HCT116 (cell line): ENCODE measurements at regions of chr14 and their contacts with region 1.

Region 1: DNA sequence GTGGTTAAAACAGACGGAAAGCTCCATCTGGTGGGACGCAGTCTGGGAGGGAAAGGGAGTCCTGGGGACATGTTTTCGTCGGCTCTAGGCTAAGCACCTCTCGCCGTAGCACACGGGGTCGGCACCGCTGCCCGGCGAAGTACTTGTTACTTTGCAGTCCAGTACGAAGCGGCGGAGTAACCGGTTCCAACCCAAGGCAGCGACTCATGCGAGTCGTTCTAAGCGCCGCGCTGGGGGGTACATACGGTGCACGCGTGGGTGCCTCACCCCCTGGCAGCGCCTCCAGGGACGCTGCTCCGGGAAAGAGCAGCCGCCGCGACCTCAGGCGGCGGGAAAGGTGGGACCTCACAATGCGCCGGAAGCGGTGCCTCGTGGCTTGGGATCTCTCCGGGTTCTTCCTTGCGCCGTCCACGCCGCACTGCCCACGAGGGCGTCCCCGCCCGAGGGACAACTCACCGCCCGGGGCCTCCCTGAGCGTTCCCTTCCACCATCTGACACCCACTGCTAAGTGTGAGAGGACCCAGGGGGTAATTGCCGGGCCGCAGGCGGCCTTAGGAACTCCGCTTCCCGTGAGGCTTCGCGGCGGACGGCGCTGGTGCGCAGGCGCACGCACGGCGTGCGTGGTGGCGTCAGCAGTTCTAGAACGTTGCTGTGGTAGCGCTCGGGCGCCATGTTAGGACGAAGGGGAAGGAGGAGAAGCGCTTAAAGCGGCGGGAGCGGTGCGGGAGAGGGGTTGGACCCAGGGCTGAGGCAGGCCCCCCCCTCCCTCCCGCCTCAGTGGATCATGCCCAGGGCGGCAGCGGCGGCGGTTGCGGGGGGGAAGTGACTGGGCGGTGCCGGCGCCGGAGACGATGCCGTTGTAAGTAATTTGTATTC is at the start of gene PAPOLA:
- DNase-seq: peak; percentile 91
- ATAC-seq: peak; percentile 90
- H3K4me3 ChIP-seq: peak within 1 kb of the TSS; percentile 70 to 97
- H3K27ac ChIP-seq: peak within 1 kb of the TSS; percentile 83
- H3K4me1 ChIP-seq: peaks cover 13 to 33% of the 10 kb centered on the region in 2 experiments
- H3K27me3 ChIP-seq: no peaks in the 10 kb centered on the region
- CTCF ChIP-seq: no peak
- POLR2A ChIP-seq: peak; percentile 79
- RAD21 ChIP-seq: no peak
- total RNA-seq, gene PAPOLA: 223 TPM

Region 2: DNA sequence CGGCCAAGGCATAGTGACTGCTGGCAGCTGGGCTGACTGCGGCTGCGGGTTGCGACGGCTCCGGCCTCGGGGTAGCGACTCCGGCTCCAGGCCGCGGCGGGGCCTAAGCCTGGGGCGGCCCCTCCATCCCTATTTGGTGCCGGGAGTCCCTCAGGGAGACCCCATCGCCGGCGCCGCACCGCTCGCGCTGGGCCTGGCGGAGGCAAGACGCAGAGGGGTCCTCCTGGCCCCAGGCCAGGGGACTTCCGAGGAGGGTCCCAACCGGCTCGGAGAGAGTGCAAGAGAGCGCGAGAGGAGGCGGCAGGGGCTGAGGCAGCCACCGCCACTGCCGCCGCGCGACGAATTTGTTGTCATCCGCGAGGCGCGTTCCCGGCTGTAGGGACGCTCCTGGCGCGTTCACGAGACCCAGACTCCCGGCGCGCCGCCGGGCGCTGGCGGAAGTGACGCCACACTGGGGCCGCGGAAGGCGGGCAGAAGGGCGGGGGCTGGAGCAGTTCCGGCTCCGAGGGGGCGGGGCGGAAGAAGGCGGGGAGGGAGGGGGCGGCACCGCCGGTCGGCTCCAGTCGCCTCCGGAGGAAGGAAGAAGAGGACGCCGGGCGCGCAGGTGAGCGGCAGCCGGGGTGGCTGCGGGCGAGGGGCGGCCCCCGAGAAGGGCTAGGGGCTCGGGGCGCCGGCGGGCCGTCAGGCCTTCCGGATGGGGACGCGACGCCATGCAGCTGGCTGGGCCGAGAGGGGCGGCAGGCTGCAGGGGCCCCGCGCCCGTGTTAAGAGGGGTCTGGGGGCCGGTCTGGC is 138.8 kb before region 1 on chr14 and contains the starts of genes ATG2B and GSKIP:
- CTCF ChIA-PET with region 1: no interaction called
- POLR2A ChIA-PET with region 1: no interaction called
- RAD21 ChIA-PET with region 1: no interaction called
- intact Hi-C with region 1: loop called (anchors 10 kb)
- DNase-seq: peak; percentile 83
- ATAC-seq: peak; percentile 82
- H3K4me3 ChIP-seq: peak within 1 kb of the TSS; percentile 85 to 92
- H3K27ac ChIP-seq: peak within 1 kb of the TSS; percentile 58; the same call in 1 of the 2 replicates
- H3K4me1 ChIP-seq: peaks cover 11 to 24% of the 10 kb centered on the region in 2 experiments; a peak in 2 of 4 replicates
- H3K27me3 ChIP-seq: no peaks in the 10 kb centered on the region
- CTCF ChIP-seq: no peak
- POLR2A ChIP-seq: peak; percentile 46
- RAD21 ChIP-seq: no peak
- total RNA-seq, gene ATG2B: 6.4 TPM
- total RNA-seq, gene GSKIP: 21.7 TPM

Region 3: DNA sequence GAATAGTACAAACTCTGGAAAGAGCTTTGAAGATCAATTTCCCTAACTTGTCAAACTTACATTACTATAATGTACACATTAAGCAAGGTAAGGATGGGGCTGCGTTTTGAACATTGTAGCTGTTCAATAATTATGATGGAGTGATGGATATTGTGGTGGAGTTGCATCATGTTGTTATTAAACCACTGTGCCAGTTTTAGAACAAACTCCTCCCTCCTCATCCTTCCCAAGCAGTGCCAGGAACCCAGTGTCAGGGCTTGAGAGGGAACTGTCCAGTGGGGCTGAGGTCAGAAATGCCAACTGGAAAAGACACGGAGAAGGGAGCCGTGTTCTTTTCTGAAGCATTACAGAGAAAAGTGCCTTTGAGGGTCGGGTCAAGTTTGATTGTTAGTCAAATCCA is 31.6 kb before region 1 on chr14:
- CTCF ChIA-PET with region 1: no interaction called
- POLR2A ChIA-PET with region 1: no interaction called
- RAD21 ChIA-PET with region 1: no interaction called
- intact Hi-C with region 1: loop called (anchors 2 kb)
- DNase-seq: peak; percentile 8
- ATAC-seq: no peak
- H3K4me3 ChIP-seq: no peak overlapping the region
- H3K27ac ChIP-seq: no peak overlapping the region
- H3K4me1 ChIP-seq: no peaks in the 10 kb centered on the region
- H3K27me3 ChIP-seq: no peaks in the 10 kb centered on the region
- CTCF ChIP-seq: no peak
- POLR2A ChIP-seq: no peak
- RAD21 ChIP-seq: no peak

Region 4: DNA sequence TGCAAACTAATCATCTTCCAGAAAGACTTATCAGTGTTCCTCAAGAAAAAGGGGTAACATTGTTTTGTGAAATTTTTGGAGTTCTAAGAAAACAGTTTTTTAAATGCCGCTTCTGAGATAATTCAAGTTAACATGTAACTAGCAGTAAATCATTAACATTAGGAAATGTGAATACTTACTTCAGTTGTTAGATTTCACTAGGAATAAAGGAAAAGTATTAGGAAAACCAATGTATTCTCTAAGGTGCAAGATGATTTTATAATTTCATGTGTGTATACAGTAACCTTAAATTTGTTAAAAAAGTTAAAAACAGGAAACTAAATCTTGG is 37.0 kb after region 1 on chr14:
- CTCF ChIA-PET with region 1: no interaction called
- POLR2A ChIA-PET with region 1: no interaction called
- RAD21 ChIA-PET with region 1: no interaction called
- intact Hi-C with region 1: no loop called
- DNase-seq: no peak
- ATAC-seq: no peak
- H3K4me3 ChIP-seq: no peak overlapping the region
- H3K27ac ChIP-seq: no peak overlapping the region
- H3K4me1 ChIP-seq: no peaks in the 10 kb centered on the region
- H3K27me3 ChIP-seq: no peaks in the 10 kb centered on the region
- CTCF ChIP-seq: no peak
- POLR2A ChIP-seq: no peak
- RAD21 ChIP-seq: no peak

Region 5: DNA sequence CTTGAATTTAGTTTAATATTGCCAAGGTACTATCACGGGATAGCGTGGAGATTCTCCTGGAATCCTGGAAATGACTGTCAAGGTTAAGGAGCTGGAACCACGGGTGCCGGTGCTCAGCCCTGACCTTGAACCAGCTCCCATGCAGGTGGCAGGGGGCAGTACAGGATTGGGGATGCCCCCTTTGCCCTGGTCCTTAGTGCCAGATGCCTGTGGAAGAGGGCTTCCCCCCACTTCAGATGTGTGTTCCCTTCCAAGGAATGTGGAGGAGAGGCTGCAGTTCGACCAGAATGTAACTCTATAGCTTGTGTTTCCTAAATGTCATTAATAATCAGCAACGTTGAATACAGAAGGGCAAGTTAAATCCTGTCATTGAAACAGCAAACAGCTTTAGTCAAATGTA is 554.1 kb after region 1 on chr14:
- CTCF ChIA-PET with region 1: no interaction called
- POLR2A ChIA-PET with region 1: no interaction called
- RAD21 ChIA-PET with region 1: no interaction called
- intact Hi-C with region 1: no loop called
- DNase-seq: no peak
- ATAC-seq: no peak
- H3K4me3 ChIP-seq: no peak overlapping the region
- H3K27ac ChIP-seq: no peak overlapping the region
- H3K4me1 ChIP-seq: peaks cover 0 to 4% of the 10 kb centered on the region in 2 experiments; a peak in 1 of 4 replicates
- H3K27me3 ChIP-seq: no peaks in the 10 kb centered on the region
- CTCF ChIP-seq: peak in 1 of 3 experiments; percentile 19; a peak in 1 of 6 replicates
- POLR2A ChIP-seq: no peak
- RAD21 ChIP-seq: peak; percentile 65